ENCODE measurements at regions of chr16 and their contacts with region 1.

Region 1: DNA sequence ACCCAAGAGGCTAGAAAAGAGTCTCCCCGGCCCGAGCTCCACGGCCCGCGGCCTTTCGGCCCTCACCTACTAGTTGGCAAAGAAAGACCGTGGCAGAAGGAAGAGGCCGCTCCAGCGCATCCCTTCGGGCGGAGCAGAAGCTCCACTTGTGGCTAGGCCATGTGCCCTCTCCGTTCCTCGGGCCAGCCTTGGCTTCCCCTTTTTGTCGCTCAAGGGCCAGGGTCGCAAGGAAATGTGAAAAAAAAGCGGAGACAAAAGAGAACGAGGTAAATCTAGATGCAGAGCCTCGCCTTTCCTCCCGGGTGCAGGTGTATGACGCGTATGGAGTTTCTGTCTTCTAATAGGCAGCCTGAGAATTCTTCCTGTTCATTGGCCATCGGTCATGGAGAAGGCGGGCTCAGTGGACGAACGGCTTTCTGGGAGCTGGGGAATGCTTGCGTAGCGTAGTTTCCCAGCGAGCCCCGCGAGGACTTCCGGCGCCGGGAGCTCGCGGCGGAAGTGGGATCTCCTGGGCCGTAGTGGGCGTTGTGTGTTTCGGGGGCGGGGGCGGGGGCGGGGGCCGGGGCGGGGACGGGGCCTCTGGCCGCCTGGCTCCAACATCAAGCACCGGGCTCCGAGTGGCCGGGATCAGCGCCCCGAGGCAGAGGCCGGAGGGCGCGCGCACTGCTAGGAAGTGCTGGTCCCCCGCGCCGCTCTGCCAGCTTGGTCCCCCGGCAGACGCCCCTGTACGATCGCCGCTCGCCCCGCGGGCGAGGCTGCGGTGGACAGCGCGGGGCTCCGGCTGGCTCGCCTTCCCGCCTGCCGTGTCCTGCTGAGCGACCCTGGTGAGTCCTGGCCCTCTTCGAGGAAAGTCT is at the start of gene ZNF213:
- DNase-seq: peak; percentile 97
- ATAC-seq: peak; percentile 96
- H3K4me3 Mint-ChIP-seq: peak within 1 kb of the TSS; percentile 92
- H3K27ac Mint-ChIP-seq: peak within 1 kb of the TSS; percentile 96
- H3K4me1 Mint-ChIP-seq: peaks cover 38% of the 10 kb centered on the region
- H3K27me3 Mint-ChIP-seq: no peaks in the 10 kb centered on the region
- total RNA-seq, gene ZNF213: 10.8 to 12.1 TPM

Region 2: GRCh38 chr16:3003582-3004302 is 131.0 kb before region 1 on chr16:
- CTCF ChIA-PET with region 1: interaction called, 11 read pairs
- POLR2A ChIA-PET with region 1: no interaction called
- DNase-seq: peak; percentile 98
- ATAC-seq: peak; percentile 100
- H3K4me3 Mint-ChIP-seq: peak overlapping the region; percentile 61
- H3K27ac Mint-ChIP-seq: peak overlapping the region; percentile 67
- H3K4me1 Mint-ChIP-seq: peaks cover 24% of the 10 kb centered on the region
- H3K27me3 Mint-ChIP-seq: peaks cover 13% of the 10 kb centered on the region

Region 3: DNA sequence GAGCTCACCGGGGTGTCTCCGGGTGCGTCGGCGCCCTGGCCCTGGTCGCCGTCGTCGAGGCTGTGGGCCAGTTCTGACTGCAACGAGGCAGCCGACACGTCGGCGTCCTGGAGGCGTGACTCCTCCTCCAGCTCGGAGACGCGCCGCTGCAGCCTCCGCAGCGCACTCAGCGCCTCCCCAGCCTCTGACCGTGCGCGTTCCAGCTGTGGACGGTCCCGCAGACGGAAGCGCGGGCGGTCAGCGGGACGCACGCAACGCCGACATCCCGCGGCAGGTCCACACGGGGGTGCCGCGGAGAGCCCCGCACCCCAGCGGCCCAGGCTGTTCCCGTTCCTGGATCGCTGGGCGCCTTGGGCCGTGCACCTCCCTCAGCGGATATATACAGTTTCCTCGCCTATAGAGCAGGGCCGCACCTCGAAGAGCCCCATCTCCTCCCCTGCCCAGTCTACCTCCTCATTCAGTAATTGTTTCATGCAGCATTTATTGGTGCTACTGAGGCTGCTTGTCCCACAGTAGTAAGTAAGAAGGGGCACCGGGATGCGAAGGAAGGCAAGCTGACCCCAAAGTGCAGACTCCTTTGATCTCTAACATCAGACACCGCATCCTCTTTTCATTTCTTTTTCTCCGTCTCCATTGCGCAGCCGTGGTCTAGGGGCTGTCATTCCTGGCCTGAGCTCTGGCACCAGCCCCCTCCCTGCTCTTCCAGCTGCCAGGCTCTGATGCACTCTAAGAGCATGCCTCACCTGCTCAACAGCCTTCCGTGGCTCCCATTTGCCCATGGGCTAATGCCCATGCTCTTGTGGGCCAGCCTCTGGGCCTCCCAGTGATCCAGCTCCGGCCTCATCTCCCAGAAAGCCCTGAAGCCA is 105.0 kb before region 1 on chr16:
- CTCF ChIA-PET with region 1: interaction called, 159 read pairs
- POLR2A ChIA-PET with region 1: interaction called, 4 read pairs
- DNase-seq: peak; percentile 68
- ATAC-seq: peak; percentile 58
- H3K4me3 Mint-ChIP-seq: peak overlapping the region; percentile 65
- H3K27ac Mint-ChIP-seq: peak overlapping the region; percentile 65
- H3K4me1 Mint-ChIP-seq: peaks cover 44% of the 10 kb centered on the region
- H3K27me3 Mint-ChIP-seq: peaks cover 40% of the 10 kb centered on the region

Region 4: DNA sequence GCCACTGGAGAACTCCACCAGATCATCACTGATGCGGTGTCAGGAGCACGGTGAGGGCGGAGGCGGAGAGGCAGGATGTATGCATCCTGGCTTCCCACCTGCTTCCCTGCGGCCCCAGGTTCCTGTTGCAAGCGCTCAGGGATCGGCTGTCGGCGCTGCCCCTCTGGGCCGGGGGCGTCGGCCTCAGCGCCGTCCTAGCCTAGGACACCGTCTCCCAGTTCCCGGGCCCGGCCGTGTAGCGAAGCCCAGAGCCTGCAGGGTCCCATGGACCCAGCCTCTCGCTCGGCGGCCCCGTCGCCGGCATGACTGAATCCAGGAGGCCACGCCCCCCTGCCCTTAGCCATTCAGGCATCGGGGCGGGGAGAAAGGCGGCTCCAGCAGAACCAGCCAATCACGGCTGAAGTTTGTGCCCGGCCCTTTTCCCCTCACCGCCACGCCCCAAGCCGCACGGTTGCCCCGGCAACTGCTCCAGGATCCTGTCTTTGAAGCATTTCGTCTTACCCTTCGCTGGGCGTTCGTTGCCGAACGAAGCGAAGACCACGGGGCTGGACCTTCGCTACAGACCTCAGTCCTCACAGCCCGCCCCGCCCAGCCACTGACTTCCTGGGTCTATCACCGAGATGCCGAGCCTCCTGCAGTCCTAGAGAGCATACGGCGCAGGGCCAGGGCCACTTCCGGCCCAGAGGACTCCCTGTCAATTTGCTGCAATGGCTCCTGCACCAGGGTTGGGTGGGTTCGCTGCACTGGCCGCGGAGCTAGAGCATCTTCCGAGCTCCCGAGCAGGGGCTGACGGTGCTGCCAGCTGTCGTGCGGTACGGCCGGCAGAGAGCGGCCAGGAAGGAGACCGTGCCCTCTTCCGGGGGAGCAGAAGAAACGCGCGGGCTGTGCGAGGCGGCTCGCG is 10.6 kb before region 1 on chr16:
- CTCF ChIA-PET with region 1: interaction called, 6 read pairs
- POLR2A ChIA-PET with region 1: interaction called, 14 read pairs
- DNase-seq: peak; percentile 99
- ATAC-seq: peak; percentile 89
- H3K4me3 Mint-ChIP-seq: peak overlapping the region; percentile 93
- H3K27ac Mint-ChIP-seq: peak overlapping the region; percentile 99
- H3K4me1 Mint-ChIP-seq: peaks cover 46% of the 10 kb centered on the region
- H3K27me3 Mint-ChIP-seq: peaks cover 4% of the 10 kb centered on the region

Region 5: DNA sequence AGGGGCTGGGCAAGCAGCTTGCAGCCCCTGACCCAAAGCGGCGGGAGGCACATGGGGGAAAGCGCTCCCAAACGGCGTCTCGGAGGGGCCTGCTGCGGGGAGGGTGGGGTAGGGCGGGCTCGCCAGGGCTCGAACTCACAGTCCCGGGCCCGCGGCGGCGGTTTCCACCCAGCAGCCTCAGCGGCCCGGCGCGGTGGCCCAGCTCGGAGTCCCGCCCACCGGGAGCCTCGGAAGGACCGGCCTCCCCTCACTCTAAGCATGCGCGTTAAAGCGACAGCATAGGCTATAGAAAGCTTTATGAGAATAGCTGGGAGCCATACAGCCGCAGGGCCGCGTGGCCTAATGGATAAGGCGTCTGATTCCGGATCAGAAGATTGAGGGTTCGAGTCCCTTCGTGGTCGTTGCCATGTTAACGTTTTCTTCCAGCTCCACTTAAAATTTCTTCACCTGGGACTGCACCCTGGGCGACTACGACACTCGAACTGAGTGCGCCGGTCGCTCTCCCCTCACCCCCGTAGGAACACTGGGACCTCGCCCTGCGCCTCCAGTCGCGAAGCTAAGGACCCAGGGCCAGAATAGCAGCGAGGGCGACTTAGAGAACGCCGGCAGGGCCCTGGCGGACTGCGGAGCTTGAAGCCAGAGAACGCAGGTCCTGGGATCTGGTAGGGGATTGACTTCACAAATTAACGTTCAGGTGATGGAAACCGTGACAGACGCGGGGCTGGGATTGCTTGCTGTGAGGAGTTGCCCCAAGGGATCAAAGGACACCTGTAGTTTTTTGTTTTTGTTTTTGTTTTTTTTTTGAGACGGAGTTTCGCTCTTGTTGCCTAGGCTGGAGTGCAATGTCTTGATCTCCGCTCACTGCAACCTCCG is 15.8 kb after region 1 on chr16:
- CTCF ChIA-PET with region 1: interaction called, 86 read pairs
- POLR2A ChIA-PET with region 1: interaction called, 16 read pairs
- DNase-seq: peak; percentile 98
- ATAC-seq: peak; percentile 84
- H3K4me3 Mint-ChIP-seq: peak overlapping the region; percentile 85
- H3K27ac Mint-ChIP-seq: peak overlapping the region; percentile 87
- H3K4me1 Mint-ChIP-seq: peaks cover 38% of the 10 kb centered on the region
- H3K27me3 Mint-ChIP-seq: peaks cover 17% of the 10 kb centered on the region